Panc1 (cell line): ENCODE measurements at regions of chr10 and their contacts with region 1.

Region 1: GRCh38 chr10:49700997-49701396 is 21.5 kb downstream of the C10orf53 start:
- DNase-seq: no peak
- ATAC-seq: no peak
- H3K4me3 ChIP-seq: no peak overlapping the region
- H3K27ac ChIP-seq: no peak overlapping the region
- H3K4me1 ChIP-seq: no peaks in the 10 kb centered on the region
- H3K27me3 ChIP-seq: peaks cover under 1% of the 10 kb centered on the region
- CTCF ChIP-seq: no peak

Region 2: GRCh38 chr10:49726593-49726992 is 25.6 kb after region 1 on chr10:
- CTCF ChIA-PET with region 1: no interaction called
- POLR2A ChIA-PET with region 1: no interaction called
- in situ Hi-C with region 1: no loop called
- intact Hi-C with region 1: loop called (anchors 2 kb)
- DNase-seq: no peak
- ATAC-seq: no peak
- H3K4me3 ChIP-seq: no peak overlapping the region
- H3K27ac ChIP-seq: no peak overlapping the region
- H3K4me1 ChIP-seq: no peaks in the 10 kb centered on the region
- H3K27me3 ChIP-seq: no peaks in the 10 kb centered on the region; the same call in 1 of the 2 replicates
- CTCF ChIP-seq: no peak